A549 (cell line): ENCODE measurements at regions of chr7 and their contacts with region 1.

Region 1: GRCh38 chr7:3300651-3301378 is at the start of gene SDK1:
- DNase-seq: peak; percentile 59 to 91
- ATAC-seq: peak; percentile 88 to 92
- H3K4me3 ChIP-seq: peak within 1 kb of the TSS; percentile 84
- H3K27ac ChIP-seq: peak within 1 kb of the TSS; percentile 74 to 87
- H3K4me1 ChIP-seq: peaks cover 8% of the 10 kb centered on the region; the same call in 1 of the 3 replicates
- CTCF ChIP-seq: peak; percentile 95
- EP300 ChIP-seq: no peak
- POLR2A ChIP-seq: no peak
- RAD21 ChIP-seq: peak; percentile 48 to 90; a peak in 4 of 5 replicates
- polyA plus RNA-seq, gene SDK1: 0.12 and 0.20 TPM in 2 replicates

Region 2: GRCh38 chr7:3162289-3162688 is 138.5 kb before region 1 on chr7:
- CTCF ChIA-PET with region 1: no interaction called
- POLR2A ChIA-PET with region 1: no interaction called
- DNase-seq: no peak
- ATAC-seq: no peak
- H3K4me3 ChIP-seq: no peak overlapping the region
- H3K27ac ChIP-seq: no peak overlapping the region
- H3K4me1 ChIP-seq: no peaks in the 10 kb centered on the region
- CTCF ChIP-seq: no peak
- EP300 ChIP-seq: no peak
- POLR2A ChIP-seq: no peak
- RAD21 ChIP-seq: 0 out of 5 replicates have a peak, but pooled peaks of 1 of the 2 experiments have one; percentile 25

Region 3: DNA sequence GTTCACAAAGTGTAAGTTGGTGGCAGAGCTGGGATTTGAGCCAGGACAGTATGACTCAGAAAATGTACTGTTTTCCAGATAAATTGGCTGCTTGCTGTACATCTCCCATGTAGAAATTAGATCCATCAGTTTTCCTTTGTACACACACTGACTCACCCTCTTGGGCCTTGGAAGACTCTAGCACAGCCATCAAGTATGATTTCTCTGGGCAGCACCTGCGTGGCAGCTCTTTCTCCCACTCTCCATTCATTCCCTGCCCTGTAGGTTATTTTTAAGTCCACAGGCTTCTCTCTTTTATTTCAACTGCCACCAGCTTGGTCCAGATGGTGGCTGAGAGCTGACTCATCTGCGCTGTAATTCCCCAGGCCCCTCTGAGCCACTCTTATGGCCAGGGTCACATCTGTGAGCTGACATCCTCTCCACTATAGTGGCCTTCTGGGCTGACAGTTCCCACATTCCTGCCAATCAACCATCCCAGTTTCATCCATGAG is 28.1 kb before region 1 on chr7:
- CTCF ChIA-PET with region 1: interaction called, 18 read pairs
- POLR2A ChIA-PET with region 1: no interaction called
- DNase-seq: peak; percentile 18 to 65
- ATAC-seq: peak; percentile 67 to 79; a peak in 5 of 6 replicates
- H3K4me3 ChIP-seq: no peak overlapping the region
- H3K27ac ChIP-seq: peak overlapping the region; percentile 17 to 63; a peak in 3 of 6 replicates
- H3K4me1 ChIP-seq: peaks cover 24% of the 10 kb centered on the region
- CTCF ChIP-seq: no peak
- EP300 ChIP-seq: no peak
- POLR2A ChIP-seq: no peak
- RAD21 ChIP-seq: no peak; a peak in 1 of 5 replicates

Region 4: GRCh38 chr7:3289996-3290395 is 10.8 kb before region 1 on chr7:
- CTCF ChIA-PET with region 1: interaction called, 11 read pairs
- POLR2A ChIA-PET with region 1: no interaction called
- DNase-seq: no peak
- ATAC-seq: no peak
- H3K4me3 ChIP-seq: no peak overlapping the region
- H3K27ac ChIP-seq: no peak overlapping the region
- H3K4me1 ChIP-seq: no peaks in the 10 kb centered on the region
- CTCF ChIP-seq: no peak
- EP300 ChIP-seq: no peak
- POLR2A ChIP-seq: no peak
- RAD21 ChIP-seq: no peak

Region 5: GRCh38 chr7:3333861-3334260 is 33.0 kb after region 1 on chr7:
- CTCF ChIA-PET with region 1: no interaction called
- POLR2A ChIA-PET with region 1: no interaction called
- DNase-seq: no peak
- ATAC-seq: no peak
- H3K4me3 ChIP-seq: no peak overlapping the region
- H3K27ac ChIP-seq: no peak overlapping the region
- H3K4me1 ChIP-seq: no peaks in the 10 kb centered on the region
- CTCF ChIP-seq: no peak
- EP300 ChIP-seq: no peak
- POLR2A ChIP-seq: no peak
- RAD21 ChIP-seq: no peak